Activated CD8-positive, alpha-beta memory T cell treated with anti-CD3 and anti-CD28 coated beads, Interleukin-2, amount 10 ng/mL, durations not matched to agents 7 days and 5 days (primary cell): ENCODE measurements at regions of chr2 and their contacts with region 1.

Region 1: GRCh38 chr2:157327621-157328500 is 2.2 kb upstream of the ERMN start:
- DNase-seq: peak; percentile 91
- ATAC-seq: peak; percentile 98
- H3K4me3 Mint-ChIP-seq: peak overlapping the region; percentile 24
- H3K27ac Mint-ChIP-seq: peak overlapping the region; percentile 53
- H3K4me1 Mint-ChIP-seq: peaks cover 39% of the 10 kb centered on the region
- H3K27me3 Mint-ChIP-seq: no peaks in the 10 kb centered on the region

Region 2: GRCh38 chr2:156647377-156648010 is 680.4 kb before region 1 on chr2:
- CTCF ChIA-PET with region 1: no interaction called
- DNase-seq: no peak
- ATAC-seq: no peak
- H3K4me3 Mint-ChIP-seq: no peak overlapping the region
- H3K27ac Mint-ChIP-seq: no peak overlapping the region
- H3K4me1 Mint-ChIP-seq: no peaks in the 10 kb centered on the region
- H3K27me3 Mint-ChIP-seq: peaks cover 2% of the 10 kb centered on the region

Region 3: GRCh38 chr2:157076526-157077161 is 251.2 kb before region 1 on chr2:
- CTCF ChIA-PET with region 1: no interaction called
- DNase-seq: no peak
- ATAC-seq: no peak
- H3K4me3 Mint-ChIP-seq: no peak overlapping the region
- H3K27ac Mint-ChIP-seq: no peak overlapping the region
- H3K4me1 Mint-ChIP-seq: no peaks in the 10 kb centered on the region
- H3K27me3 Mint-ChIP-seq: peaks cover 2% of the 10 kb centered on the region

Region 4: GRCh38 chr2:157302492-157303099 is 25.3 kb before region 1 on chr2:
- CTCF ChIA-PET with region 1: interaction called, 96 read pairs
- DNase-seq: no peak
- ATAC-seq: peak; percentile 76
- H3K4me3 Mint-ChIP-seq: no peak overlapping the region
- H3K27ac Mint-ChIP-seq: no peak overlapping the region
- H3K4me1 Mint-ChIP-seq: peaks cover 18% of the 10 kb centered on the region
- H3K27me3 Mint-ChIP-seq: peaks cover 6% of the 10 kb centered on the region

Region 5: DNA sequence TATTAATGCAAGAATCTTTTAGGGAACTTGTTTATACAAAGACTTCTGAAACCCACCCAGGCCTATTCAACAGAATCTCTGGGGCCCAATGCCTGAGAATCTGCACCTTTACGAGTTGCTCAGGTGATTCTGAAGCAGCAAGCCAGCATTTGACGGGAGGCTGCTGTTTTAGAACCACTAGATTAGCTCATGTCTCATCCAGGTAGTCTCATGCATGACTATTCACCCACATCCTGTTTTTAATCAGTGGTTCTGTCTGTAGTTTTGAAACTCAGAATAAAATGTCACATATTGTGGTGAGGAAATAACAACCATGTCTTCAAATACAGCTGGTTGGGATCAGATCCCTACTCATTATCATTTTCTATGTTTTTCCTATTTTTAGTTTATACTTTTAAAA is 76.5 kb after region 1 on chr2:
- CTCF ChIA-PET with region 1: interaction called, 10 read pairs
- DNase-seq: peak; percentile 73
- ATAC-seq: peak; percentile 98
- H3K4me3 Mint-ChIP-seq: no peak overlapping the region
- H3K27ac Mint-ChIP-seq: peak overlapping the region; percentile 81
- H3K4me1 Mint-ChIP-seq: peaks cover 58% of the 10 kb centered on the region
- H3K27me3 Mint-ChIP-seq: no peaks in the 10 kb centered on the region

Region 6: GRCh38 chr2:157420771-157421323 is 93.0 kb after region 1 on chr2:
- CTCF ChIA-PET with region 1: interaction called, 25 read pairs
- DNase-seq: no peak
- ATAC-seq: peak; percentile 63
- H3K4me3 Mint-ChIP-seq: peak overlapping the region; percentile 31
- H3K27ac Mint-ChIP-seq: peak overlapping the region; percentile 87
- H3K4me1 Mint-ChIP-seq: peaks cover 78% of the 10 kb centered on the region
- H3K27me3 Mint-ChIP-seq: no peaks in the 10 kb centered on the region

Region 7: DNA sequence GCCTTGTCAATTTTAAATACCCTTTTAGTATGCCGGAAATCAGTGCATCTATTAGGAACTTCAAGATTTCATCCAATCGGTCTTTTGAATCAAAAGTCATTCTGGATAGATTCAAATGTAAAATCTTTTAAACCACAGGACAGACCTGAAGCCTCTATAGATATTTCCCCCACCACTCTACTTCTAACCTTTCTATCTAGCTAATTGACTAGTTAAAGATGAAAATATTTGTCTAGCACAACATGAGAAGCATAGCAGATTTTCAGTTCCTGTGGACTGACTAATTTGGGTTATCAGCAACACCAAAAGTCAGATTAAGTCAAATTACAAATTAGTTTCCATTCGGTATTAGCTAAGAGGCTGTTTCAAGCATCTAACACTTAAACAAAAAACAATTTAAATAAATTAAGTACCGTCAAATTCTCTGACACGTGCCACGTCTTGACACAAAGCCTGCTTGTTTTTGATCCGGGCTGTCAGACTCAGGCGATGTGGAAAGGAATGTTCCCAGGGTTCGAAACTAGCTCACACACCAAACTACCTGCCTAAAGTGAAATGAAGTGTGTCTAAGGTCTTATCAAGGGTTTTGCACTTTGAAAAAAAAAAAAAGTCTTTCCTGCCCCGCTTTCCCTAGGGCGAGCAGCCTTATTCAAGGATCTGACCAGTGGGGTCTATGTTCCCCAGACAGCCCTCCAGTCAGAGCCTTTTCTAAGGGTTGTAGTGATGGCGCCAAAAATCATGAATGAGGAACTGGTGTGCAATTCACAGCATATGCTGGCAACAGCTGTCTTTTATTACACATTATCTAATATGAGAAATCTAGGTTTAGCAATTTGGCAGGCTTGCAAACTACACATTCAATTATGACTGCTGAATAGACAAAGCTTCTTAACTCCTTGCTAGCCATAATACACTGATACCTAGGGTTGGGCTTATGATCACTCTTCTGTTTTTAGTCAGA is 111.3 kb after region 1 on chr2:
- CTCF ChIA-PET with region 1: interaction called, 25 read pairs
- DNase-seq: no peak
- ATAC-seq: peak; percentile 8
- H3K4me3 Mint-ChIP-seq: peak overlapping the region; percentile 100
- H3K27ac Mint-ChIP-seq: peak overlapping the region; percentile 98
- H3K4me1 Mint-ChIP-seq: peaks cover 29% of the 10 kb centered on the region
- H3K27me3 Mint-ChIP-seq: no peaks in the 10 kb centered on the region

Region 8: GRCh38 chr2:157492189-157492773 is 164.4 kb after region 1 on chr2:
- CTCF ChIA-PET with region 1: interaction called, 109 read pairs
- DNase-seq: peak; percentile 86
- ATAC-seq: peak; percentile 91
- H3K4me3 Mint-ChIP-seq: no peak overlapping the region
- H3K27ac Mint-ChIP-seq: no peak overlapping the region
- H3K4me1 Mint-ChIP-seq: peaks cover 63% of the 10 kb centered on the region
- H3K27me3 Mint-ChIP-seq: no peaks in the 10 kb centered on the region

Region 9: DNA sequence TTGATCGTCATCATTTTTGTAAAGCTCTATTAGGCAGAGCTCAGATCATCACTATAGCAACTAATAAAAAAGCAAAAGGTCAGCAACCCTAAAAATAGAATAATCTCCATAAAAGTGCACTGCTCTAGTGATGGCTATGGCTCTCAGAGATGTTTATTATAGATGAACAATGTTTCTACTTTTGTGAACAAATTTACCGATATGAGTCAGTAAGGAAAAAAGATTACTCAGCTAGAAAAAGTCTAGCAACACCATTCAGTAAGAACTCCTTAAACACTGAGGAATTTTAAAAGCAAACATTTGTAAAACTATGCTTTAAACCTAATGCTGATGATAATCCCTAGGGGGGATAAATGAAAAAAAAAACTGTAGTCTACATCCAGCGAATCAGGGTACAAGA is 231.2 kb after region 1 on chr2:
- CTCF ChIA-PET with region 1: no interaction called
- DNase-seq: no peak
- ATAC-seq: no peak
- H3K4me3 Mint-ChIP-seq: no peak overlapping the region
- H3K27ac Mint-ChIP-seq: no peak overlapping the region
- H3K4me1 Mint-ChIP-seq: peaks cover 31% of the 10 kb centered on the region
- H3K27me3 Mint-ChIP-seq: no peaks in the 10 kb centered on the region